ENCODE measurements at regions of chr1 and their contacts with region 1.

Region 1: DNA sequence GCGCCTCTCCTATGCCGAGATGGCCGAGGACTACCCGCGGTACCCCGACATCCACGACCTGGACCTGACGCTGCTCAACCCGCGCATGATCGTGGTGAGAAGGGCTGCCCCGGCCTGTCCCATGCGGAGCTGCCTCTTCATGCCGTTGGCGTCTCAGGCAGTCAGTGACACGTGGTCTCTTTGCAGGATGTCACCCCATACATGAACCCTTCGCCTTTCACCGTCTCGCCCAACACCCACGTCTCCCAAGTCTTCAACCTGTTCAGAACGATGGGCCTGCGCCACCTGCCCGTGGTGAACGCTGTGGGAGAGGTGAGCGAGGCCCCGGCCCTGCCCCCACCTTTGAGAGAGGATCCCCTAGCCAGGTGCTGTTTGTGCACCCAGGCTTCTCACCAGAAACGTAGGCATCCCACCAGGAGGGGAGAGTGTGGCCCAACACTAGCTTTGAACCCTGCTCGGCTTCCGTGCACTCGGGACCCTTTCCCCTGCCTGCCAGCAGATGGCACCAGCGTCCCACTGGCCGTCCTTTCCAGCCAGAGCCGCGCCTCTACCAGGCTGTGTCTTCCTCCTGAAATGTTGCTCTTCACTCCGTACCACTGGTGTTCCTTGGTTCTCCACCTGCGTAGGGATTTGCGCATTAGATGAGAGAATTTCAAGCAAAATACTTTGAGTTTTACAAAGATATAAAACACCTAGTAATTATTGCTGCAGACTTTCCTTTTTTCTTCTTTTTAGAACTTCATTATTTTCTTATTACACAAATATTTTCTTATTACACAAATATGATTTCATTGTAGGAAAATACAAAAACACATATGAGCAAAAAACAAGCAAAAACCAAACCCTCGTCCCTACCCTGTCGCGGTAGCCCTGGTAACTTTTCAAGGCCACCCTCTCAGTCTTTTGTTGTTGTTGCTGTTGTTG is 9.0 kb downstream of the NPPA start:
- DNase-seq: peak; percentile 84
- ATAC-seq: peak; percentile 78

Region 2: GRCh38 chr1:11891433-11892186 is 53.0 kb after region 1 on chr1:
- intact Hi-C with region 1: loop called (anchors 2 kb)
- DNase-seq: no peak
- ATAC-seq: no peak

Region 3: DNA sequence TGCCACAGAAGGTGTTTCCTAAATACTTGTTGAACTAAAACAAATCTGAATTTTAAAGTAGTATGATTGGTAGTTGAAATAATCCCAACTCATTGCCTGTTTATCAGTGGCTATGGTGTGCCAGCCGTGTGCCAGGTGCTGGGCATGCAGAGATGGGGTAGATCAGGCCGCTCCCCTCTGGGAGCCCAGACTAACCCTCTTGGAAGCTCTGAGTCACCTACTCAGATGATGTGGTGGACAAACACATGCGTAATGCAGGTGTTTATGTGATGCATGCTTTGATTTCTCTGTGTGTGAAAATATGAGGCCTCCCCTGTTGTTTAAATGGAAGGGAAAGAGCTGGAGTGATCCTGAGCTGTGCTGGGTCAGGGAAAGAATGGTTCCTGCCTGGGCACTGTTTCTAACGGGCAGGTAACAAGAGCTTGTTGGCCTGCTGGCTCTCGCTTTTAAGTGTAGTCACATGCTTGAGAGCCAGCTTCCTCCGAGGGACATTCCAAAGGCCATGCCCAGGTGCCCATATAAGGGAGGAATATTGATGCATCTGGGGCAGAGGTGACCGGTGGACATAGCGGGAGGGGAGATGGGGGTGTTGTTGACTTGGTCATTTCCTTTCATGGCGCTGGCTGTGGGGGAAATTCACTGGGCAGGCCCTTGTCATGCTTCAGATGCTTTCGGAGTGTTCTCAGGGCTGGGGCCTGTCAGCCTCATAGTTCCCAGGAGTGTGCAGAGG is 151.9 kb after region 1 on chr1:
- intact Hi-C with region 1: no loop called
- DNase-seq: peak; percentile 77
- ATAC-seq: peak; percentile 89

Region 4: GRCh38 chr1:12124693-12125421 is 286.2 kb after region 1 on chr1:
- intact Hi-C with region 1: no loop called
- DNase-seq: peak; percentile 84
- ATAC-seq: peak; percentile 80